Activated CD4-positive, alpha-beta memory T cell treated with anti-CD3 and anti-CD28 coated beads for 36 hours (primary cell): ENCODE measurements at regions of chr5 and their contacts with region 1.

Region 1: GRCh38 chr5:76544268-76544926 is 78.8 kb downstream of the F2RL2 start:
- DNase-seq: peak; percentile 79
- H3K4me3 Mint-ChIP-seq: peak overlapping the region; percentile 74
- H3K27ac Mint-ChIP-seq: peak overlapping the region; percentile 99
- H3K4me1 Mint-ChIP-seq: peaks cover 92% of the 10 kb centered on the region
- H3K27me3 Mint-ChIP-seq: no peaks in the 10 kb centered on the region

Region 2: DNA sequence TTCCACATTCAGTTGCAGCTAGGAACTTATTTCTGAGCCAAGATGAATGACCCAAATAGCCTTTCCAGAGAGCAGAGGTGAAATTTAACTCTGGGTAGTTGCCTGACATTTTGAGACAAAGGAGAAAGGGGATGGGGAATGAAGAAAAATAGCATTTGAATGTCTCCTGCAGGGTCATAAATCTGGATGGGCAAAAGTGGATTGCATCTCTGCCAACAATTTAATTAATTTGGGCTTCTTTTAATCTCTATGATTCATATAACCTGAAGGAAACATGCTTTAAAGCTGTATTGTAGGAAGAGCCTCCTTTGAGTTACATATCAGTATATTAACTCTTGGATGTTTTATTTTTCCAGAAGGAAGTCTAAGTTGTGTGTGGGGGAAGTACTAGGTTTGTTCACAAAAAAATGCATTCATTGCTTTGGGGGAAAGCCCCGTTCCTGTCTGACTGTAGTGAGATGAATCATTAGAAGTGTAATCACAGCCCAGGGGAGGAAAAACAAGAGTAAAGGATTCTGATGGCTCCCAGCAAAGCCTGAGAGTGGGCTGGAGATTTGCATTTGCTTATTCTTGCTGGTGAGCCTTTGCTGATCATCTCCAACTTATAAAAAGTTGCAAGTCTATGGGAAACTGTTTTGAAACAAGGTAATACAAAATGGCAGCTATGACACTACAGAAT is 274.3 kb before region 1 on chr5:
- CTCF ChIA-PET with region 1: interaction called, 5 read pairs
- POLR2A ChIA-PET with region 1: interaction called, 3 read pairs
- intact Hi-C with region 1: loop called (anchors 1 kb)
- DNase-seq: peak; percentile 67
- H3K4me3 Mint-ChIP-seq: peak overlapping the region; percentile 50
- H3K27ac Mint-ChIP-seq: peak overlapping the region; percentile 95
- H3K4me1 Mint-ChIP-seq: peaks cover 41% of the 10 kb centered on the region
- H3K27me3 Mint-ChIP-seq: peaks cover 5% of the 10 kb centered on the region

Region 3: GRCh38 chr5:76337953-76338451 is 206.4 kb before region 1 on chr5:
- CTCF ChIA-PET with region 1: interaction called, 6 read pairs
- POLR2A ChIA-PET with region 1: no interaction called
- intact Hi-C with region 1: loop called (anchors 1 kb)
- DNase-seq: peak; percentile 51
- H3K4me3 Mint-ChIP-seq: no peak overlapping the region
- H3K27ac Mint-ChIP-seq: no peak overlapping the region
- H3K4me1 Mint-ChIP-seq: peaks cover 27% of the 10 kb centered on the region
- H3K27me3 Mint-ChIP-seq: no peaks in the 10 kb centered on the region

Region 4: GRCh38 chr5:76527685-76528161 is 16.7 kb before region 1 on chr5:
- CTCF ChIA-PET with region 1: interaction called, 41 read pairs
- POLR2A ChIA-PET with region 1: interaction called, 19 read pairs
- intact Hi-C with region 1: loop called (anchors 1 kb)
- DNase-seq: no peak
- H3K4me3 Mint-ChIP-seq: no peak overlapping the region
- H3K27ac Mint-ChIP-seq: peak overlapping the region; percentile 8
- H3K4me1 Mint-ChIP-seq: peaks cover 82% of the 10 kb centered on the region
- H3K27me3 Mint-ChIP-seq: no peaks in the 10 kb centered on the region

Region 5: DNA sequence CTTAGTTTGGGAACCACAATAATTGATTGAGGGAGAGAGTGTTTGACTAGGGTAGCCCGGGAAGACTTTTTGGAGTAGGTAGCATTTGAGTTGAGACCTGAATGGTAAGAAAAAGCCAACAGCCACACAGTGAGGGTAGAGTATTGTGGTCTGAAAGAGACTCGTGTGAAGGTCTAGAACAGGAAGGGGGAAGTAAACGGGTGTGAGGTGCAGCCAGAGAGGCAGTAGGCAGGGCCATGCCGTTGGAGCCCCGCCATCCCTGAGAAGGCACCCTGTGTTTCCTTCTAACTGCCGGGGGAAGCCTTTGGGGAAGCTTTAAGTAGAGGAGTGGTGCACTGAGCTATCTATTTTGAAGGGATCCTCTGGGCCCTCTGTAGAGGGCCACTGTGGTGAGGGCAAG is 82.3 kb after region 1 on chr5:
- CTCF ChIA-PET with region 1: no interaction called
- POLR2A ChIA-PET with region 1: no interaction called
- intact Hi-C with region 1: no loop called
- DNase-seq: no peak
- H3K4me3 Mint-ChIP-seq: no peak overlapping the region
- H3K27ac Mint-ChIP-seq: no peak overlapping the region
- H3K4me1 Mint-ChIP-seq: peaks cover 16% of the 10 kb centered on the region
- H3K27me3 Mint-ChIP-seq: no peaks in the 10 kb centered on the region

Region 6: GRCh38 chr5:76733049-76733417 is 188.6 kb after region 1 on chr5:
- CTCF ChIA-PET with region 1: no interaction called
- POLR2A ChIA-PET with region 1: interaction called, 3 read pairs
- intact Hi-C with region 1: loop called (anchors 2 kb)
- DNase-seq: peak; percentile 77
- H3K4me3 Mint-ChIP-seq: peak overlapping the region; percentile 46
- H3K27ac Mint-ChIP-seq: peak overlapping the region; percentile 86
- H3K4me1 Mint-ChIP-seq: peaks cover 29% of the 10 kb centered on the region
- H3K27me3 Mint-ChIP-seq: peaks cover 3% of the 10 kb centered on the region